A673 (cell line): ENCODE measurements at regions of chr2 and their contacts with region 1.

Region 1: DNA sequence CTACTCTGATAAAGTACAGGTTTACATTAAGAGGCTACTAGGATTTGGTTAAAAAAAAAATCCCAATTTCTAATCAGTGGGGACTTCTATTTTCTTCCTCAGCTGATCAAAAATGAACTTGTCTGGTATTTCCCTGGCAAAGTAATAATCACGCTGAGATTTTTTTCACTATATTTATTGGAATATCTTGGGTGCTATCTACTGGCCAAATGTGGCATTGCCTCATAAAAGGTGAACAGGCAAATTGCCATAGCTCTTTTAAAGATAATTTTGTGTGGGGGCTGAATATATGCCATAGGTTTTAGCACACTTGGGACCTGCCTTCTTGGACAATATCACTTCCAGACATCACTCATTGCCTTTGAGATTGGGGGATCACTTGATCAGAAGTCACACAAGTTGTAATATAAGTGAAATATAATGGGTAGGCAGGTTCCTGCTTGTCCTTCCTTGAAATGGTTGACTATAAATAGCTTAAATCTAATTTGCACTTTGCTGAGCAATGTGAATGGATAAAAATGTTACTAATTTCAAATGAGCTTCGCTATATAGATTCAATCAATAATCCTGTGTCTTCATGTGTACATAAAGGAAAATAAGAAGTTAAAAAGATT is 7.0 kb upstream of the NXPH2 start:
- DNase-seq: peak; percentile 69
- H3K4me3 ChIP-seq: no peak overlapping the region
- H3K27ac ChIP-seq: no peak overlapping the region
- H3K4me1 ChIP-seq: no peaks in the 10 kb centered on the region
- H3K27me3 ChIP-seq: peaks cover 19% of the 10 kb centered on the region
- CTCF ChIP-seq: peak; percentile 82

Region 2: GRCh38 chr2:137865954-137866540 is 921.1 kb before region 1 on chr2:
- CTCF ChIA-PET with region 1: interaction called, 3 read pairs
- POLR2A ChIA-PET with region 1: no interaction called
- intact Hi-C with region 1: loop called (anchors 5 kb)
- DNase-seq: peak; percentile 66
- H3K4me3 ChIP-seq: no peak overlapping the region
- H3K27ac ChIP-seq: no peak overlapping the region
- H3K4me1 ChIP-seq: no peaks in the 10 kb centered on the region
- H3K27me3 ChIP-seq: no peaks in the 10 kb centered on the region
- CTCF ChIP-seq: peak; percentile 69

Region 3: GRCh38 chr2:137910641-137911040 is 876.5 kb before region 1 on chr2:
- CTCF ChIA-PET with region 1: interaction called, 6 read pairs
- POLR2A ChIA-PET with region 1: no interaction called
- intact Hi-C with region 1: loop called (anchors 2 kb)
- DNase-seq: peak; percentile 22
- H3K4me3 ChIP-seq: no peak overlapping the region
- H3K27ac ChIP-seq: no peak overlapping the region
- H3K4me1 ChIP-seq: no peaks in the 10 kb centered on the region
- H3K27me3 ChIP-seq: no peaks in the 10 kb centered on the region
- CTCF ChIP-seq: peak; percentile 64

Region 4: DNA sequence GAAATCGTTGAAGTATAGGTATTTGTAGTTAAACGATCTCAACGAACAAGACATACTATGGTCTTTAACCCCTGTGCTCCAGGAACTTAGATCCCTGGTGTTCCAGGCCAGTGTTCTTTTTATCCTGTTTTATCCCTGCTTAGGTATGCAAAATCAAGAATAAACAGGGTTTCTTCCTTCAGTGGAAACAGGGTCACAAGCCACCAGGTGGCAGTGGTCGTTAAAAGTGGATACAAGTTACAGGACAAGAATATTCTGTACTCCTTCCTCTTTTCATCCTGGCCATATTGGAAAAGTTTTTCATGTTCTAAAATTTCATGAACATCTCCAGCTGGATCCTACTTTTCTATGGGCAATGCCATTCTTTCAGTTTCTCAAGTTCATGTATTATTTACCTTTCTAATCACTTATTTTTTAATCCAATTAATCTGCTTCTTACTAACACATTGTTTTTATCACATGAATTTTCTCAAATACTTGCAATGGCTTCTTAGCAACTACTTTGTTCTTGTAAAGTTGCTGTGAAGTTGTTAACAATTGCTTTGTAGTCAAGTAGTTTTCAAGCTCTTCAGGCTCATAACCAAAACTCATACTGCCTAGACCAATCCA is 839.3 kb before region 1 on chr2:
- CTCF ChIA-PET with region 1: no interaction called
- POLR2A ChIA-PET with region 1: no interaction called
- intact Hi-C with region 1: loop called (anchors 10 kb)
- DNase-seq: peak; percentile 65
- H3K4me3 ChIP-seq: no peak overlapping the region
- H3K27ac ChIP-seq: no peak overlapping the region
- H3K4me1 ChIP-seq: no peaks in the 10 kb centered on the region
- H3K27me3 ChIP-seq: no peaks in the 10 kb centered on the region
- CTCF ChIP-seq: peak; percentile 69

Region 5: DNA sequence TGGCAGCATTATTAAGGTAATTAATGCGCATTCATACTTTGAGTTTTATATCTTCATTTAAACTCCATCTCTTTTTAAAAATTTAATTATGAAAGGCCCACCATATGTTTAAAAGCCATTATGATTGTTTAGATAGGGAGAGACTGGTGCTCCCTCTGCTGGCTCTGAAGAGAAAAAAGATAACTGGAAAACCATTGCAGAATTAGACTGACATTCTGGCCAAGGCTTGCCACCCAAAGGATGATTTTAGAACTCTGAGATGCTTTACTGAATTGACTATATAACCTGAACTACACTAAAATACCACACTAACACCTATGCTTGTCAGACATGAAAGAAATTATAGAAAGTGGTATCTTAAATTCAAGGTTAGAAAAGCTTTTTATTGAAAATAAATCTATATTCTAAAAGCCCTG is 413.2 kb before region 1 on chr2:
- CTCF ChIA-PET with region 1: no interaction called
- POLR2A ChIA-PET with region 1: no interaction called
- intact Hi-C with region 1: loop called (anchors 5 kb)
- DNase-seq: peak; percentile 47
- H3K4me3 ChIP-seq: no peak overlapping the region
- H3K27ac ChIP-seq: no peak overlapping the region
- H3K4me1 ChIP-seq: no peaks in the 10 kb centered on the region
- H3K27me3 ChIP-seq: no peaks in the 10 kb centered on the region
- CTCF ChIP-seq: peak; percentile 84

Region 6: DNA sequence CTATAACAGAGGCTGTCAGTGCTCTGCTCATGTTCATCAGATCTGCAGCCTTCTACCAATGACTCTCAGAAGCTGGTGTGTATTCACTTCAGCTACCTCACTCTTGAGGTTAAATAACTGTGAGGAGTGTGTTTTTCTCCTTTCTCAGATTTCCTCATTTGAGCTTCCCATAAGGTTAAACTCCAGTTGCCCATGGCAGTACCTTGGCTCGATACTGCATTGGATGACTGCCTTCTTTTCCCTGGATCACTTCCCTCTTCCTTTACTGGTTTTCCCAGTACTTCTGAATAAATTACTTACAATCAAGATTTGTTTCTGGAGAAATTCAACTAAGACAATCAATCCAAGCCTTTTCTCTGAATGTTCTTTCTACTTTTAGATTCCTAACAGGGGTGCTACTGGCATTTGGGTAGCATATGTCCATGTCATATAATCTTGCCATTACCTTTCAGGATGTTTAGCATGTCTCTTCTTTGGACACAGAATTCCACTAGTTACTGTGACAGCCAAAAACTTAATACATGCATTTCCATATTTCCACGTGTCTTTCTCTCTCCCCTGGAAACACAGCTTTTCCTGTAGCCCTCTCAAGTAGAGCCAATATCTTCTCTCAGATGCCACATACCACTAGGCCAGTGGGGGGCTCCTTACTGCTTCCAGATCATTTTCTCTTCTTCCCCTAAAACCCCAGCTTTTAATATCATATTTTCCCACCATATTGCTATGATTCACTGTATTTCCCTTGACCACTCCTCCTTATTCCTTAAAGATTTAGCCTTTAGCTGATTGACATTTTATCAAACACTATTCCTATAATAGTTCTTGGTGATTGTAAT is 300.6 kb before region 1 on chr2:
- CTCF ChIA-PET with region 1: no interaction called
- POLR2A ChIA-PET with region 1: no interaction called
- intact Hi-C with region 1: loop called (anchors 5 kb)
- DNase-seq: no peak
- H3K4me3 ChIP-seq: no peak overlapping the region
- H3K27ac ChIP-seq: no peak overlapping the region
- H3K4me1 ChIP-seq: no peaks in the 10 kb centered on the region
- H3K27me3 ChIP-seq: no peaks in the 10 kb centered on the region
- CTCF ChIP-seq: peak; percentile 43

Region 7: GRCh38 chr2:139099721-139100120 is 312.6 kb after region 1 on chr2:
- CTCF ChIA-PET with region 1: no interaction called
- POLR2A ChIA-PET with region 1: no interaction called
- intact Hi-C with region 1: no loop called
- DNase-seq: no peak
- H3K4me3 ChIP-seq: no peak overlapping the region
- H3K27ac ChIP-seq: no peak overlapping the region
- H3K4me1 ChIP-seq: no peaks in the 10 kb centered on the region
- H3K27me3 ChIP-seq: no peaks in the 10 kb centered on the region
- CTCF ChIP-seq: no peak